ENCODE measurements at regions of chr12 and their contacts with region 1.

Region 1: GRCh38 chr12:132414634-132415326 is 75.2 kb upstream of the FBRSL1 start:
- DNase-seq: peak; percentile 47 to 87 (median 74)
- ATAC-seq: peak; percentile 93
- H3K4me3 ChIP-seq: no peak overlapping the region
- H3K4me3 Mint-ChIP-seq: no peak overlapping the region
- H3K27ac ChIP-seq: no peak overlapping the region
- H3K27ac Mint-ChIP-seq: no peak overlapping the region
- H3K4me1 ChIP-seq: peaks cover 14% of the 10 kb centered on the region
- H3K4me1 Mint-ChIP-seq: no peaks in the 10 kb centered on the region
- H3K27me3 ChIP-seq: peaks cover 0 to 11% of the 10 kb centered on the region in 2 experiments
- H3K27me3 Mint-ChIP-seq: no peaks in the 10 kb centered on the region
- CTCF ChIP-seq: peak; percentile 72

Region 2: GRCh38 chr12:132144115-132144812 is 270.5 kb before region 1 on chr12 and contains the starts of genes DDX51 and NOC4L:
- CTCF ChIA-PET with region 1: no interaction called
- POLR2A ChIA-PET with region 1: no interaction called
- intact Hi-C with region 1: no loop called
- DNase-seq: peak; percentile 92 to 98 (median 96)
- ATAC-seq: peak; percentile 89
- H3K4me3 ChIP-seq: peak within 1 kb of the TSS; percentile 80 to 98
- H3K4me3 Mint-ChIP-seq: peak within 1 kb of the TSS; percentile 95
- H3K27ac ChIP-seq: peak within 1 kb of the TSS; percentile 84 to 90
- H3K27ac Mint-ChIP-seq: peak within 1 kb of the TSS; percentile 98
- H3K4me1 ChIP-seq: peaks cover 24% of the 10 kb centered on the region
- H3K4me1 Mint-ChIP-seq: peaks cover 27% of the 10 kb centered on the region
- H3K27me3 ChIP-seq: no peaks in the 10 kb centered on the region
- H3K27me3 Mint-ChIP-seq: no peaks in the 10 kb centered on the region
- CTCF ChIP-seq: no peak
- total RNA-seq, gene DDX51: 61.5 to 66.5 TPM
- total RNA-seq, gene NOC4L: 25.8 to 28.3 TPM

Region 3: GRCh38 chr12:132162508-132163031 is 252.2 kb before region 1 on chr12:
- CTCF ChIA-PET with region 1: interaction called, 10 read pairs
- POLR2A ChIA-PET with region 1: no interaction called
- intact Hi-C with region 1: no loop called
- DNase-seq: peak in 3 of 9 experiments; percentile 21 to 71 (median 56)
- ATAC-seq: peak; percentile 50
- H3K4me3 ChIP-seq: no peak overlapping the region
- H3K4me3 Mint-ChIP-seq: no peak overlapping the region
- H3K27ac ChIP-seq: no peak overlapping the region
- H3K27ac Mint-ChIP-seq: no peak overlapping the region
- H3K4me1 ChIP-seq: peaks cover 23% of the 10 kb centered on the region
- H3K4me1 Mint-ChIP-seq: peaks cover 14% of the 10 kb centered on the region
- H3K27me3 ChIP-seq: no peaks in the 10 kb centered on the region
- H3K27me3 Mint-ChIP-seq: no peaks in the 10 kb centered on the region
- CTCF ChIP-seq: no peak

Region 4: DNA sequence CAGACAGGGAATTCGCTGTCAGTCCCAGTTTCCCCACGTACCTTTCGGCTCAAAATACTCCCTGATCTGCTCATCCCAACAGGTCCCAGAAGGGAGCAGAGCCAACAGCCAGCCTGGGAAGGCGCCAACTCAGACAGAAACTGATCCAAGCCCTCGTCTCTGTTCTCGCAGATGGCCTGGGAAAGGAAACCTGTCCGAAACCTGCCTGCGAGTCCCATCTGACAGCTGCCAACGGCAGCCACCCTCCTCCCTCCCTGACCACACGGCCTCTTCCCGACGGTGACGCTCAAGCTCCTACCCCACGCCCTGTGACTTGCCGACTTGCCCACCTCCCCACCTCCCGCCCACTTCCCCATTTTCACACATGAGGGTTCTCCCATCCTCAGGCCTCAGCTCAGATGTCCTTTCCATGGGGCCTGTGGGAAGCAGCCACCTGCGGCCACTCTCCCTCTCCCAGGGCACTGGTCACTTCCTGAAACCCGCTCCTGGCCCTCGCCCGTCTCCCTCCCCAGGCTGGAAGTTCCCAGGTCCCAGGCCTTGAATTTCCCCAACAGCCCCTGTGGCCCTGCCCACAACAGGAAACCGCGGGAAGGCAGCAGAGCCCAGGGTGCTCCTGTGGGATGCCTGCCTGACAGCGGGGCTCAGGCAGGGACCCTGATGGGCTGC is 14.3 kb after region 1 on chr12:
- CTCF ChIA-PET with region 1: interaction called, 16 read pairs
- POLR2A ChIA-PET with region 1: no interaction called
- intact Hi-C with region 1: no loop called
- DNase-seq: peak in 1 of 9 experiments; percentile 31
- ATAC-seq: no peak
- H3K4me3 ChIP-seq: no peak overlapping the region
- H3K4me3 Mint-ChIP-seq: no peak overlapping the region
- H3K27ac ChIP-seq: no peak overlapping the region
- H3K27ac Mint-ChIP-seq: no peak overlapping the region
- H3K4me1 ChIP-seq: peaks cover 47% of the 10 kb centered on the region
- H3K4me1 Mint-ChIP-seq: peaks cover 27% of the 10 kb centered on the region
- H3K27me3 ChIP-seq: peaks cover 0 to 6% of the 10 kb centered on the region in 2 experiments
- H3K27me3 Mint-ChIP-seq: peaks cover 2% of the 10 kb centered on the region
- CTCF ChIP-seq: no peak

Region 5: GRCh38 chr12:132523576-132524331 is 109.0 kb after region 1 on chr12:
- CTCF ChIA-PET with region 1: interaction called, 122 read pairs
- POLR2A ChIA-PET with region 1: interaction called, 7 read pairs
- intact Hi-C with region 1: loop called (anchors 1 kb)
- DNase-seq: peak; percentile 54 to 86 (median 74)
- ATAC-seq: peak; percentile 71
- H3K4me3 ChIP-seq: no peak overlapping the region
- H3K4me3 Mint-ChIP-seq: no peak overlapping the region
- H3K27ac ChIP-seq: no peak overlapping the region
- H3K27ac Mint-ChIP-seq: no peak overlapping the region
- H3K4me1 ChIP-seq: peaks cover 8% of the 10 kb centered on the region
- H3K4me1 Mint-ChIP-seq: peaks cover 12% of the 10 kb centered on the region
- H3K27me3 ChIP-seq: no peaks in the 10 kb centered on the region
- H3K27me3 Mint-ChIP-seq: no peaks in the 10 kb centered on the region
- CTCF ChIP-seq: peak; percentile 78

Region 6: DNA sequence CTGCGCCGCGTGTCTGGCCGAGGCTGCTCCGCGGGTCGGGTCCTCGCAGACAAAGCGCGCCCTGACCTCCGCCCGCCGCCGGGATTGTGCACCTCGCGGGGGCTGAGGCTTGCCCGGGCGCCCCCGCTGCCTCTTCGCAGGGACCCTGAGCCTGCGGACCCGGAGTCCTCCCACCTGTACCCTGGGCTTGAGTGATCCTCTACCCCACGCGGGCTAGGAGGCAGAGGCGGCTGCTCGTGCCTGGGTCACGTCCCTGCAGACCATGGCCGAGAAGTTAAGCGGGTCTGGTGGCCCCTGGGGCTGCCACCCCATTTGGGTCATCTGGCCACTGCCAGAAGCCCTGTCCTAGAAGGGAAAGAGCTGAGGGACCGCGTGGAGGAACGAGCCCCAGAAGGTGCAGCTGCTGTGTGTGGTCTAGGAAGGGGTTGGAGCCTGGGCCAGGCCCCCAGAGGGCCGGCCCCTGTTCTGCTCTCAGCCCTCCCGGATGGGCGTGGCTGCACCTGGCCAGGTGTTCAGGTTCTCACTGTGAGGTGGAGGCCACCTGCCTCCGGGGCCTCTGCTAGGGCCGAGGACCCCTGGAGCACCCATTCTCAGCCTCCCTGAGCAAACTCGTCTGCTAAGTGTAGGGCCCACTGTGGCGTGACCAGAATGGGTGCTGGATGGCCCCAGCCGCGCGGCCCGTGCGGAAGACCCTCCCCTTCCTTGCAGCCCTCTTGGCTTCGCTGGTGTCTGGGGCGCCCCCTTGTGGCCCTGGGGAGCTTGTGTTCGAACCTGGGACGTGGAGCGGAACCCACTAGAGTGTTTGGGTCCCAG is 146.0 kb after region 1 on chr12:
- CTCF ChIA-PET with region 1: interaction called, 10 read pairs
- POLR2A ChIA-PET with region 1: interaction called, 5 read pairs
- intact Hi-C with region 1: loop called (anchors 1 kb)
- DNase-seq: peak; percentile 44 to 81 (median 72)
- ATAC-seq: peak; percentile 57
- H3K4me3 ChIP-seq: peak overlapping the region; percentile 20 to 34
- H3K4me3 Mint-ChIP-seq: peak overlapping the region; percentile 67
- H3K27ac ChIP-seq: no peak overlapping the region
- H3K27ac Mint-ChIP-seq: no peak overlapping the region
- H3K4me1 ChIP-seq: peaks cover 27% of the 10 kb centered on the region
- H3K4me1 Mint-ChIP-seq: peaks cover 20% of the 10 kb centered on the region
- H3K27me3 ChIP-seq: peaks cover 7 to 19% of the 10 kb centered on the region in 2 experiments
- H3K27me3 Mint-ChIP-seq: peaks cover 11% of the 10 kb centered on the region
- CTCF ChIP-seq: peak; percentile 67

Region 7: DNA sequence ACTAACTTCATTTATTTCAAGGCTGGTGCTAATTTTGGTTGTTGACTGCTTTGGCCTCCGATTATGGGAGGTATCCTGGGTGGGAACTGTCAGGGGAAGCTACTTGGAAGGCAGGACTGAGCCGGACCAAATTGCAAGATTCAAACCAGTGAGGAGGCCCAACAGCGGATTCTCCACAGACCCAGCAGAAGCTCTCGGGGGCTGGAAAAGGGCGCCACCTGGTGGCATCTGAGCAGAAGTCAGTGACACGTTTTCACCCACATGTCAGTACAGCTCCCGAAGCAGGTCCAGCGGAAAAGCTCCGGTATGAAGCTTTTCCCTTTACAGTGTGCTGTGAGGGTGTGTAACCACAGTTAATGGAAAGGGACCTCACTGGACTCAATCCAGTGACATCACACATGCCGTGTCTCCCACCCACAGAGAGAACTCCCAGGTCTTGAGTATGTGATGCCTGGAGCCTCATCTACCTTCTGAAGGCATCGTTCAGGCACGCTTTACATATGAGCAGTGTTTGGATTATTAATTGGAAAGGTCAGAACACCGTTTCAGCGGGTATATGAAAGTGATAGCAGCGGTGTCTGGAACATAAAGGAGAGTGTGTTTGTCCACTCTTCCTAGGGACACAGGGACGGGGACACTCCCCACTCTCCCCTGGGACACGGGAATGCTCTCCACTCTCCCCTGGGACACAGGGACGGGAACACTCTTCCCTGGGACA is 200.2 kb after region 1 on chr12:
- CTCF ChIA-PET with region 1: interaction called, 41 read pairs
- POLR2A ChIA-PET with region 1: no interaction called
- intact Hi-C with region 1: loop called in 1 of 2 experiments (anchors 1 kb)
- DNase-seq: peak; percentile 62 to 90 (median 79)
- ATAC-seq: peak; percentile 91
- H3K4me3 ChIP-seq: no peak overlapping the region
- H3K4me3 Mint-ChIP-seq: no peak overlapping the region
- H3K27ac ChIP-seq: no peak overlapping the region
- H3K27ac Mint-ChIP-seq: no peak overlapping the region
- H3K4me1 ChIP-seq: peaks cover 11% of the 10 kb centered on the region
- H3K4me1 Mint-ChIP-seq: peaks cover 14% of the 10 kb centered on the region
- H3K27me3 ChIP-seq: peaks cover 20 to 22% of the 10 kb centered on the region in 2 experiments
- H3K27me3 Mint-ChIP-seq: peaks cover 45% of the 10 kb centered on the region
- CTCF ChIP-seq: peak; percentile 81